Motor neuron (in vitro differentiated cells): ENCODE measurements at regions of chr3 and their contacts with region 1.

Region 1: DNA sequence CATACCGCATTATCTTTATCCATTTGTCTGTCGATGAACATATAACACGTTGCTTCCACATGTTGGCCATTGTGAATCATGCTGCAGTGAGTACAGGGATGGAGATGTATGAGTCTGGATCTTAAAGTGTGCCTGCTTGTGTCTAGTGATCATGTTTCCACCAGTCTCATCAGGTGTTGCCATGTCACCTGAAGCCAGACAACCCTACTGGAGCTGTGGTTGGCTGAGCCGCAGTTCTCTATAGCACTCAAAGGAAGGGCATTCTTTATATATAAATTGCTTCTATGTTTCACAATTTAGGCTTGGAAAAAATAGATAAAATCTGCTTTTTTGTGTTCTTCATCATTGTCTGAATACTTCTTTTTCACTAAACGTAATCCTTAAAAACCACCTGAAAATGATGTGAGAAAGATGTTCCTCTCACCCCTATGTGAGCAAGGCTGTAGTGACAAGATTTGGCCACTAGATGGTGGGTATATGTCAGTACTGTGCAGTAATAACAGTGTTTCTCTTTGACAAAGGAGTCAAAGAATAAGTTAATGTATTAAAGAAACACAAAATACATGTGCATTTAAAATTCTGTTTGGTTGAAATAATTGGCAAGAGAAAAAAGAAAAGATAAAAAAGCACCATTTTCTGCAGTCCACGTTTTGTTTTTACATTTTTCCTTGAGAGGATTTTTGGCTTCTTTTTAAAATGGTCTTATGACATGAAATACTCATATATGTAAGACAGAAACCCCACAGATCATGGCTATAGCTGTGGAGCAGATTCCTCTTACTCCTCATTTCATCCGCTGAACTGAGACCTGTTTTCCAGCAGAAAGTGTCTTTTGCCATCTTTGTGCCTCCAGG is 394.5 kb upstream of the DPPA4 start:
- ATAC-seq: peak in 7 of 8 experiments; percentile 43 to 79 (median 59)
- H3K4me3 ChIP-seq: no peak overlapping the region
- H3K27ac ChIP-seq: no peak overlapping the region
- H3K4me1 ChIP-seq: no peaks in the 10 kb centered on the region

Region 2: GRCh38 chr3:109548192-109548938 is 183.5 kb before region 1 on chr3:
- in situ Hi-C with region 1: no loop called
- ATAC-seq: peak in 3 of 8 experiments; percentile 34 to 86 (median 42)
- H3K4me3 ChIP-seq: no peak overlapping the region
- H3K27ac ChIP-seq: no peak overlapping the region
- H3K4me1 ChIP-seq: no peaks in the 10 kb centered on the region

Region 3: DNA sequence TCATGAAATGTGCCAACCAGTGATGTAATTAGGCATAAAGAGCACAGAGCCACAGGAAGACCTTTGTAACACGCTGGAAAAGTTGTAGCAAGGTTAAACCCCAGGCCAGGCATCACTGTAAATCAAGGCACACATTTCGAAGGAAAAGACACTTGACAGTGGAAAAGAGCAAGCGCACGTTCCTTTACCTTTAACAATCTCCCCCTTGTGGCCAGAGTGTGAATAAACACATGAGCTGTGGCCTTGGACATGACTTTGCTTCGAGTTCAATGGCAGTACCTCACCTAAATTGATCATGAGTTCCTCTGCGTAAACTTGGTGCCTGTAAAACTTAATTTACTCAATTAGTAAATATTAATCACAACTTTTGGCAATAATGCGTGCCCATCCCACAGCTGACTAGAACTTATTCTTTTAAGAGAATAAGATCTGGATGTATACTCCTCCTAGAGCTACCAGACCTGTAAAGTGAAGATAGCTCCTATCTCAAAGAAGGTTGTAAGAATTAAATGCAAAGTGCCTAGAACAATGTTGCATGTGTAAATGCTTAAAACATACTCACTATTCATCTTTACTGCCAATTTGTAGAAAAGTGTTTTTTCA is 582.8 kb after region 1 on chr3:
- in situ Hi-C with region 1: loop called in 2 of 9 experiments (anchors 25 kb)
- ATAC-seq: peak in 5 of 8 experiments; percentile 32 to 65 (median 45)
- H3K4me3 ChIP-seq: no peak overlapping the region
- H3K27ac ChIP-seq: no peak overlapping the region
- H3K4me1 ChIP-seq: peaks cover 0 to 6% of the 10 kb centered on the region in 2 donors